ENCODE measurements at regions of chr1 and their contacts with region 1.

Region 1: GRCh38 chr1:227437495-227438008 is 119.3 kb upstream of the CDC42BPA start:
- DNase-seq: no peak
- ATAC-seq: peak; percentile 85

Region 2: GRCh38 chr1:226912587-226913176 is 524.9 kb before region 1 on chr1:
- intact Hi-C with region 1: loop called in 1 of 2 experiments (anchors 10 kb)
- DNase-seq: peak; percentile 70 to 74
- ATAC-seq: peak; percentile 86

Region 3: GRCh38 chr1:227234998-227235405 is 202.6 kb before region 1 on chr1:
- intact Hi-C with region 1: loop called in 1 of 2 experiments (anchors 5 kb)
- DNase-seq: no peak
- ATAC-seq: peak; percentile 87

Region 4: DNA sequence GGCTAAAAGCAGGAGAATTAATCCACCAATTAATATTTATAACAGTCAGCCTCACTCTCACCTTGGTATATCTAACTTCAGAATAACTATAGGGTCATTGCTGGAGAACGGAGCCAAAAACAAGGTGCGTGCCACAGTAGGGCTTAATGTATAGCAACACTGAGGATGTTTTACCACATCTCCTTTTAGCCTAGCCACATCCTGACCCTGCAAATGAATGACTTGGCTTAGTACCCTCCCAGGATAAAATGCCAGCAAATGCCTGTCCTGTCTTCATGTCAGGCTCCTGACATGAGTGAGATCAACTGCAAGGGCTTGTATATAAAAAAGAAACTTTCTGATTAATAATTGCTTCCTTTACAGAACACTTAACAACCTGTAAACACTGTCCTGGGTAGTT is 116.5 kb before region 1 on chr1:
- intact Hi-C with region 1: loop called in 1 of 2 experiments (anchors 10 kb)
- DNase-seq: no peak
- ATAC-seq: no peak

Measured in left colon (tissue), 2 donors.